ENCODE measurements at regions of chr10 and their contacts with region 1.

Region 1: GRCh38 chr10:63711867-63712716 is 190.9 kb downstream of the REEP3 start:
- DNase-seq: peak; percentile 94

Region 2: DNA sequence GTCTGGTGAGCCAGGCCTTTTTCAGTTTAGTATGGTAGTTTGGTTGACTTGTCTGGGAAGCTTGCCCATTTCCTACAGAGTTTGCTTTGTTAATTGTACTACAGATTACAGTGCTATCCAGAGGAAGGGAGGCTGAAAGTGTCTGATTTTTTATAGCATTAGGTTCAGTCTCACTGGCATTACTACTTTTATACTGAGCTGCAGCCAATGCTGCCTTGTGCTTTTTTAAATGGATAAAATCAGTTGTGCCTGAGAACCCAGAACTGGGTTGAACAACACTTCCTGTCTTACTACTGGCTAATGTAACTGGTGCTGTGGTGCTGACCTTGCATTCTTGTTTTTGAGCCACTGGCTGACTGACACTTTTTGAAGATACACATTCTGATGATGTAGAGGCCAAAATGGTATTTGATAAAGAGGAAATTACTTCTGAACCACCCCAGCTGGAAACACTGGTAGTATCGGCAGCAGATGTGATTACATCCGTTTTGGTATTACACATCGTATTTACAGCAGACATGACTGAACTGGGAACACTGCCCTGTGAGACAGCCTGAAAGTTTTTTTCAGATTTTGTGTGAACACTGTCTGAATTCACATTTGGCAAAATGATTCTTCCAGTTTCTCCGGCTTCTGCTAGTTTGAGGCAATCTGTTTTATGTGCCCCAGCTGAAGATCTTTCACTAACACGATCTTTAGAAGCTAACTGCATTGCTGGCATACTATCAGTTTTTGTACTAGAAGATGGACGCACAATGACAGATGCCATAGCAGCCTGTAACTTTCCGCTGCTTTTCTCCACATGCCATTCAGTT is 504.9 kb before region 1 on chr10:
- intact Hi-C with region 1: loop called (anchors 5 kb)
- DNase-seq: no peak

Region 3: DNA sequence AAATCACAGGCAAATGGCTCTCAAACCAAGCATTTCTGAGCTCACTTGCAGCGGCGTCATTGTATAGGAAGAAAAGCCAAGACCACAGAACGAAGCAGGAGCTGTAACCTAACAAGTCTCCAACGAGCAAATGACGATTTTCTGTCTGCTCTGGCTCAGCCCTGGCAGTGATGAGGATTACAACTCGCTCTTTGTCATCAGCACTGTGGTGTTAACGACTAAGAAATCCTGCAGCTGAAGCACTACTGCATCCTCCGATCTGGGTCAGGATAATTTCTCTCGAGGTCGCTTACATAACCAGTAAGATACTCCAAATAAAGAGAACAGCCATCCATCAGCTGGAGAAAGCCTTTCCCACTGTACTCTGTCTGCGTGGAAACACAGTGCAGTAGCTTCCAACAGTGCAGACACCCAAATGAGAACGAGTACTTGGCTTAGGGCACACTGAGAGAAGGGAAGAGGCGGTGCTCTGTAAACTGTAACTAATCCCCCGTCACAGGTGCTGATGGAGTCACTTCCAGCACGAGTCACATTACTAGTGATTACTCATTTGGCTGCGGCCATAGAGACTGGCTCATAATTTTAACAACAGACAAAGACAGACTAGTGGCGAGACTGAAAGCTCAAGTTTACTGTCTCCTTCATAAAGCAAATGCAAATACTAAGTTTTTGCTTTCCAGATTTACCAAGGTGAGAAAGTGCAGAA is 443.1 kb before region 1 on chr10:
- intact Hi-C with region 1: loop called (anchors 5 kb)
- DNase-seq: peak; percentile 91

Region 4: GRCh38 chr10:63521416-63522276 is 190.4 kb before region 1 on chr10:
- intact Hi-C with region 1: loop called (anchors 5 kb)
- DNase-seq: peak; percentile 90

Region 5: DNA sequence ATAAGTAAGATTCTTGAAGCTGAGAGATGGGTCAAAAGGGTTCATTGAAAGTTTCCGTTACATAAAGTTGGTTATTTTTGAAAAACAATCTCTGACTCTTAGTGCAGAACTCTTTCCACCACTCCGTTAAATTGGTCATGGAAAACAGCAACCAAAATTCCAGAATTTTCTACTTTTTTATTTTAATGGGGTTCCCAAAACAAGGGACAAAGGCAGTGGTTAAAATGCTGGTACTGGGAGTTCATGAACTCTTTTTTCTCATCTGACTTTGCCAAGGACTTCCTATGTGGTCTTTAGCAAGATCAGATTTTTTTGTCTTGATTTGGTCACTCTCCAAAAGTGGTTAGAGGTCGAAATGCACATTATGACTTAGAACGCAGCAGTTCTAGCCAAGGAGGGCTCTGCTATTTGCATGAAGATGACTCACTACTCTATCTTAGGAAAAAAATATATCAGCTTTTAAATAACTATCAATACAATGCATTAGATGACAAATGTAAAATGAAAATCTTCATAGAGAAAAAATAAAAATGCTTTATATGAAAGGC is 45.2 kb before region 1 on chr10:
- intact Hi-C with region 1: loop called (anchors 5 kb)
- DNase-seq: no peak

Region 6: DNA sequence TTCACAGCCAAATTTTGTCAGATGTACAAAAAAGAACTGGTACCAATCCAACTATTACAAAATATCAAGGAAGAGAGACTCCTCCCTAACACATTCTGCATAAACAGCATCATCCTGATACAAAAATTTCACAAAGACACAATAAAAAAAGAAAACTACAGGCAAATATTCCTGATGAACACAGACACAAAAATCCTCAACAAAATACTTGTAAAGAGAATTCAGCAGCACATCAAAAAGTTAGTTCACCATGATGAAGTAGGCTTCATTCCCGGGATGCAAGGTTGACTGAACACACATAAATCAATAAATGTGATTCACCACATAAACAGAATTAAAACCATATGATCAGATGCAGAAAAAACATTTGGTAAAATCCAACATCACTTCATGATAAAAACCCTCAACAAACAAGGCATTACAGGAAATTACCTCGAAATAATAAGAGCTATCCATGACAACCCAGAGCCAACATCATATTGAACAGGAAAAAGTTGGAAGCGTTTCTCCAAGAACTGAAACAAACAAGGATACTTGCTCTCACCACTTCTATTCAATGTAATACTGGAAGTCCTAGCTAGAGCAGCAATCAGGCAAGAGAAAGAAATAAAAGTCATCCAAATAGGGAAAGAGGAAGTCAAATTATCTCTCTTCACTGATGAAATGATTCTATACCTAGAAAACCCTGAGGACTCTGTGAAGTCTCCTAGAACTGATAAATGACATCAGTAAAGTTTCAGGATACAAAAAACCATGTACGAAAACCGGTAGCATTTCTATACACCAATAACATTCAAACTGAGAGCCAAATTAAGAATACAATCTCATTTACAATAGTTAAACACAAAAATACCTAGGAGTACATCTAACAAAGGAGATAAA is 32.2 kb after region 1 on chr10:
- intact Hi-C with region 1: no loop called
- DNase-seq: no peak

Region 7: GRCh38 chr10:63763738-63764137 is 51.6 kb after region 1 on chr10:
- intact Hi-C with region 1: no loop called
- DNase-seq: no peak